AG04449 (cell line): ENCODE measurements at regions of chr1 and their contacts with region 1.

Region 1: GRCh38 chr1:226121587-226122400 is 59.3 kb downstream of the H3-3A start:
- DNase-seq: no peak
- H3K4me3 ChIP-seq: peak overlapping the region; percentile 70
- CTCF ChIP-seq: peak; percentile 66

Region 2: DNA sequence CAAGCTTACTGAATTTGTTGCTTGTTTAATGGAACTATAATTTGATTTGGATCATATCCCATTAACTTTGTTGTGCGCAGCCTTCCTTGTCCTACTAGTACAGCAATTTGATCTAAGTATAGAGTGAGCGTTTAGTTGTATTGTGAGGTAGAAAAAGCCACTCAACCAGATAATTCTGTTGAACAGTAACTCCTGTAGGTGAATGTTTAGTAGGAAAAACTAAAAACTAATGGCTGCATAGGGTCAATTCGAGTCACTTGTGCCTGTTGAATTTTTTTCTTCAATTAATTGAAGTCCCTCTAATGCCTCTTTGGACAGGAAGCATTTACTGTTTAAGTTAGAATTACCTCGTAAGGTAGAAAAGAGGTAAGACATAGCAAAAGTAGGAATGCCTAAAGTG is 326.8 kb before region 1 on chr1:
- CTCF ChIA-PET with region 1: no interaction called
- POLR2A ChIA-PET with region 1: no interaction called
- DNase-seq: no peak
- H3K4me3 ChIP-seq: no peak overlapping the region
- CTCF ChIP-seq: no peak

Region 3: GRCh38 chr1:226062558-226063223 is 59.1 kb before region 1 on chr1 and contains the start of gene H3-3A:
- CTCF ChIA-PET with region 1: interaction called, 96 read pairs
- POLR2A ChIA-PET with region 1: no interaction called
- DNase-seq: peak; percentile 38
- H3K4me3 ChIP-seq: peak within 1 kb of the TSS; percentile 80
- CTCF ChIP-seq: no peak

Region 4: DNA sequence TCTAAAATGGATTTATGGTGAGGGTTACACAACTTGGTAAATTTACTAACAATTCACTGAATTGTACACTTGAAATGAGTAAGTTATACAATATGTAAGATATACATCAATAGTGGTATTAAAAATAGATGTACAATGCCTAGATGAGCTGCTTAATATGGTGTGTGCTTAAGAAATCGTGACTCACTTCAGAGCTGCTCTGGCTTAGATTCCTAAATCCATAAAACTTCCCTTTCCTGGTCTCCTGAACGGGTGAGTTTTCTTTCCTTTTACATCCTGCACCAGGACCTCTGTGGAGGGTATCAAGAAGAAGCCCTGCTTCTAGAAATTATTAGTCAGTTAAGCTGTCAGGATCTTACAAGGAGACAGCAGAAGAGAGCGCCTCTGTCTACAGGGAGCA is 28.8 kb before region 1 on chr1:
- CTCF ChIA-PET with region 1: interaction called, 17 read pairs
- POLR2A ChIA-PET with region 1: no interaction called
- DNase-seq: no peak
- H3K4me3 ChIP-seq: no peak overlapping the region
- CTCF ChIP-seq: no peak

Region 5: DNA sequence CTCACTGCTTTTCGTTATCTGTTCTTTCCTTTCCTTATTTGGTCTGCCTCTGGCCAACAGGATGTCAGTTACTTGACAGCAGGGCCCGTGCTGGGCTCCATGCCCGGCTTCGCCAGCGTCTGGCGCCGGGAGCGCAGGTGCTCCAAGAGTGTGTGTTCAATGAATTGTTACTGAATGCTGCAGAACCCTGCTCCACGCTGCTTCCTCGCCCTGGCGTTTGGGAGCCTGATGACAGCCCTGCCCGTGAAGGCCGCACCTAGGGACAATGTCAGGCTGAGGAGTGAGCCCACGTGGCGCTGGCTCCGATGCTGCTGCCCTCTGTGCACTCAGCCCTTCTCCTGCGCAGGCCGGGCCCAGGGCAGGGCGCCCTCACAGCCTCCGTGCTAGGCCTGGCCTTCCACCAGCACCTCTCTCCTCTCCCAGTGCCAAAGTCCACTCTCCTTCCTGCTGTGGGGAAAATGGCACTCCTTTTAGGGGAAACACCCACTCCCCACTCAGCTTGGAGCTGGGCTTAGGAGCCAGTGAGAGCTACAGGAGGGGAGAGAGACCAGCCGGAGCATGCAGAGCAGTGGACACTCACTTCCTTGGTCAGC is 13.4 kb after region 1 on chr1:
- CTCF ChIA-PET with region 1: interaction called, 44 read pairs
- POLR2A ChIA-PET with region 1: interaction called, 7 read pairs
- DNase-seq: no peak
- H3K4me3 ChIP-seq: no peak overlapping the region
- CTCF ChIP-seq: no peak

Region 6: GRCh38 chr1:226157761-226158316 is 36.0 kb after region 1 on chr1:
- CTCF ChIA-PET with region 1: interaction called, 25 read pairs
- POLR2A ChIA-PET with region 1: no interaction called
- DNase-seq: no peak
- H3K4me3 ChIP-seq: no peak overlapping the region
- CTCF ChIP-seq: no peak

Region 7: GRCh38 chr1:226176870-226177269 is 55.1 kb after region 1 on chr1:
- CTCF ChIA-PET with region 1: interaction called, 27 read pairs
- POLR2A ChIA-PET with region 1: no interaction called
- DNase-seq: no peak
- H3K4me3 ChIP-seq: no peak overlapping the region
- CTCF ChIP-seq: no peak

Region 8: DNA sequence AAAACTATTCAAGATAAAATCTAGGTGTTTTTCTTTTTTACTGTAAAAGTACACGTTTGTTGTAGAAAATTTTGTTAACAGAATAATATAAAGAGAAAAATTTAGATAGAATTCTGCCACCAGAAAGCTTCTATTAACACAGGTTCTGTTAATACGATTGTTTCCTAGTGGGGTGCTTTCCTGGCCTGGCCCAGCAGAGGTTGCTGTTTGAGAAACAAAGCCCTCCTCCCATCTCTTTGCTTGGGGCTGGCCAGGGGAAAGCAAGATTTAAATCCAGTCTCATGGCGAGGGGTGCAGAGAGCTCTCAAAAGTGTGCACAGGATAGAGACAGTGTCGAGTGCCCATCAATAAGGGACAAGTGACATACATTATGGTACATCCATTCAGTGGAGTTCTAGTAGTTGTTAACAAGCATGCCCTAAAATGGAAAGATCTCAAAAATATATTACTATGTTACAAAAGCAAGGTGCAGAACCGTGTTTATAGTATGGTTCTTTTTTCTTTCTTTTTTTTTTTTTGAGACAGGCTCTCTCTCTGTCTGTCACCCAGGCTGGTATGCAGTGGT is 79.3 kb after region 1 on chr1:
- CTCF ChIA-PET with region 1: interaction called, 282 read pairs
- POLR2A ChIA-PET with region 1: no interaction called
- DNase-seq: no peak
- H3K4me3 ChIP-seq: no peak overlapping the region
- CTCF ChIP-seq: peak; percentile 26